ENCODE measurements at regions of chr2 and their contacts with region 1.

Region 1: DNA sequence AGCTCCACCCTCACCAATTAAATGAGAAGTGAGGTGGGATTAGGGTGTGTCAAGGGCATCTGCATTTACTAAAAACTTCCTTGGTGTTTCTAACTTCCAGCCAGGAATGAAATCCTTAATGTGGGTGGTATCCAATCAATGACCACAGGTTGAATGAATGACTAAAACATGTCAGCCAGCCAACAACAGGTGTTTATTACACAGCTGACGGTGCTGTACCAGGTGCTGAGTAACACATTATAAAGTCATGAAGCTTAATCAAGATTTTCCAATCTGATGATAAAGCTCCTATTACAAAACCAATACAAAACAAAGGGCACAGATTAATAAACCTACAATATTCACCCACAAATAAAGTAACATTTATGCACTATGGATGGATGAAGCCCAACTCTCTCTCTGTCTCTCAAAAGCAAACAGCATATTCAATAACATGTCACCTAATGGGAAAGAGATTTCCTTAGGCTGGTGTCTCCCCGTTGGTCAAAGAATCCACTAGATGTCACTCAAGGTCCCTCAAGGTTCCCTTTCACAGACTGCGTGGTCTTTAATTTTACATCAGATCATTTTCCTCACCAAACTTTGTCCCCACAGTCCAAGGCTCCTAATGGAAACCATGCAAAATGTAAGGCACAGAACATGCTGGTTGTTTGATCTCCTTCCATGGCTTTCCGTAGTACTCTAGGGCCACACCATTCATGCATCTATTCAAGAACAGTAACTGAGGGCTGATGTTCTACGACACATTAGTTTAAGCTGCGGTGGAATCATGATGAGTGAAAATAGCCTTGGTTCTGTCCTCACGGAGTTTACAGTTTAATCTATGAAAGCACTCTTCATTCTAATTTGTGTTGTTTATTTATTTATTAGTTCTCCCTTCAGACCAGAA is 6.4 kb upstream of the PTPN4 start:
- H3K4me3 ChIP-seq: no peak overlapping the region
- H3K27ac ChIP-seq: no peak overlapping the region
- H3K4me1 ChIP-seq: no peaks in the 10 kb centered on the region
- CTCF ChIP-seq: peak; percentile 55; the same call in 1 of the 2 replicates

Region 2: DNA sequence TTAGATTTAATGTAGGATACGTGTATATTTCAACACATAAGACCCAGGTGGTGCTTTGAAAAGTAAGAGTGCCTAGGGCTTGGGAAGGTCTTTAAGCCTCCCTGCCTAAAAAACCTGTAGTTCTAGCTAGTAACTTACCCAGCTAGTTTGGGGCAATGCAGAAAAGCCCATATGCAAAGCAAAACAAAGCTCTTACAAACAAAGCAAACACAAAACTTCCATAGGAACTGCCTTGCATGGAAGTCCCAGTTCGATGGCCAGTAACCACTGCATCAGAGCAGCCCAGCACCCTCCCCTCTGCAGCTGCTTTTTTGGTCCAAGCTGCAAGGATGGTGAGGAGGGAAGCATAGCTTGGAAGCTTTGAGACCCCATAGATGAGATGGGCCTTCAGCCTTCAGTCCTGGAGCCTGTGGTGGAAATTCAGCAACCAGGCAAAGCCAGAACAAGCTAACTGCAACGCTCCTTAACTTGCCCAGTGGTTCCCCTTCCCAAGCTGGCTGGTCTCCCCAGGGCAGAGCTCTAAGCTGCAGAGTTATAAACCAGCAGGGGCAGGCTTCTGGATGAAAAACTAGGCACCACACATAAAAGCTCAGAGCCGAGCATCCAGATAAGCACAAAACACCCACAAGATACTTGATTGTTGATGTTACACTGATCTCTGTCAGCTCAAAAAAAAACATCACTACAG is 402.8 kb before region 1 on chr2:
- CTCF ChIA-PET with region 1: no interaction called
- POLR2A ChIA-PET with region 1: no interaction called
- H3K4me3 ChIP-seq: no peak overlapping the region
- H3K27ac ChIP-seq: no peak overlapping the region
- H3K4me1 ChIP-seq: 0 out of 2 replicates have a peak, but pooled peaks cover 6% of the 10 kb centered on the region
- CTCF ChIP-seq: no peak

Region 3: DNA sequence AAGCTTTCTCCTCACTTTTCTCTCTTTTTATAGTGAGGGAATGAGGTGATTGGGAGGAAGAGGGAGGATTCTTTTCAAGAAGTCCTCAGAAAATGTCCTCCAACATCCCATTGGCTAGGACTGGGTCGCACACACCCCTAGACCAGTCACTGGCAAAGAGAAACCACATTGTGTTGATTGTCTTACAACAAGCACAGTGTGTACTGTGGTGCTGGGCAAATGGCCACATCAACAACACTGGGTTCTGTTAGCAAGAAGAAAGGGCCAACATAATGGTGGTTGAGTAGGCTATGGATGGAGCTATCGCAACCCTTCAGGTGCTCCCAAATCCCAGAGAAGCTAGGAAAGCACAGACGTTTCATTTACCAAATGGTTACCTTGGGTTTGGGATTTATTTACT is 12.3 kb before region 1 on chr2:
- CTCF ChIA-PET with region 1: interaction called, 19 read pairs
- POLR2A ChIA-PET with region 1: no interaction called
- H3K4me3 ChIP-seq: no peak overlapping the region
- H3K27ac ChIP-seq: no peak overlapping the region
- H3K4me1 ChIP-seq: no peaks in the 10 kb centered on the region
- CTCF ChIP-seq: no peak

Region 4: GRCh38 chr2:119826370-119826961 is 73.2 kb after region 1 on chr2:
- CTCF ChIA-PET with region 1: interaction called, 32 read pairs
- POLR2A ChIA-PET with region 1: no interaction called
- H3K4me3 ChIP-seq: no peak overlapping the region
- H3K27ac ChIP-seq: no peak overlapping the region
- H3K4me1 ChIP-seq: peaks cover 8% of the 10 kb centered on the region; the same call in 1 of the 2 replicates
- CTCF ChIP-seq: peak; percentile 33; the same call in 1 of the 2 replicates

Measured in HEK293 (cell line).